PC-3 (cell line): ENCODE measurements at regions of chr7 and their contacts with region 1.

Region 1: GRCh38 chr7:70016044-70016770 is 417.9 kb downstream of the AUTS2 start:
- DNase-seq: no peak
- ATAC-seq: no peak
- H3K4me3 ChIP-seq: no peak overlapping the region
- H3K27ac ChIP-seq: no peak overlapping the region
- H3K4me1 ChIP-seq: no peaks in the 10 kb centered on the region
- H3K27me3 ChIP-seq: no peaks in the 10 kb centered on the region
- CTCF ChIP-seq: no peak

Region 2: DNA sequence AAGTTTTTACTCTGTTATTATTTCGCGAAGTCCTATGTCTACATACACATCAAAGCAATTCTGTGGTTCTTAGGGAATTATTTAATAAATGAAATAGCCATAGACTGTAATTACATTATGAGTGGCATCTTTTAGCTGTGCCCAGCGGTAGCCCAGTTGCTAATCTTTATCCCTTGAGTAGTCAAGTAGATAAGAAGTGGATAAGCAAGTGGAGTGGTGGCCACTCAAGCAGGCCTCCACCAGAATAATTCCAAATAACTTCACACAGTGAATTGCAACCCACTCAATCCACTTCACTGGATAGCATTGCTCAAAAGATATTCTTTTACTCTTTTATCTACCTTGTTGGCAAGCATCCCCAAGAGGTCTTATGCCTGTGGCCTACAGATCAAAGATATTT is 68.2 kb before region 1 on chr7:
- CTCF ChIA-PET with region 1: no interaction called
- POLR2A ChIA-PET with region 1: no interaction called
- intact Hi-C with region 1: no loop called
- DNase-seq: no peak
- ATAC-seq: no peak
- H3K4me3 ChIP-seq: no peak overlapping the region
- H3K27ac ChIP-seq: no peak overlapping the region
- H3K4me1 ChIP-seq: no peaks in the 10 kb centered on the region
- H3K27me3 ChIP-seq: no peaks in the 10 kb centered on the region
- CTCF ChIP-seq: no peak

Region 3: DNA sequence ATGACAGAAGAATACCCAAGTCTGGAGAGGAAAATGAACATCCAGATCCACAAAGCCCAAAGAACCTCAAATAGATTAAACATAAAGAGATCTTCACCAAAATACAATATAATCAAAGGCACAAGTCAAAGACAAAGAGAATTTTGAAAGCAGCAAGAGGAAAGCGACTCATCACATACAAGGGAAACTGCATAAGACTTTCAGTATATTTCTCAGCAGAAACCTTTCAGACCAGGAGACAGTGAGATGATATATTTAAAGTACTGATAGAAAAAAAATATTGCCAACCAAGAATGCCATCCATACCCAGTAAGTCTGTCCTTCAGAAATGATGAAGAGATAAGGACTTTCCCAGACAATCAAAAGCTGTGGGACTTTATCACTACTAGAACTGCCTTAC is 1034.3 kb after region 1 on chr7:
- CTCF ChIA-PET with region 1: no interaction called
- POLR2A ChIA-PET with region 1: no interaction called
- intact Hi-C with region 1: no loop called
- DNase-seq: no peak
- ATAC-seq: no peak
- H3K4me3 ChIP-seq: no peak overlapping the region
- H3K27ac ChIP-seq: no peak overlapping the region
- H3K4me1 ChIP-seq: no peaks in the 10 kb centered on the region
- H3K27me3 ChIP-seq: no peaks in the 10 kb centered on the region
- CTCF ChIP-seq: no peak

Region 4: GRCh38 chr7:71793251-71793650 is 1777.0 kb after region 1 on chr7:
- CTCF ChIA-PET with region 1: interaction called, 10 read pairs
- POLR2A ChIA-PET with region 1: no interaction called
- intact Hi-C with region 1: no loop called
- DNase-seq: no peak
- ATAC-seq: no peak
- H3K4me3 ChIP-seq: no peak overlapping the region
- H3K27ac ChIP-seq: no peak overlapping the region
- H3K4me1 ChIP-seq: no peaks in the 10 kb centered on the region
- H3K27me3 ChIP-seq: no peaks in the 10 kb centered on the region
- CTCF ChIP-seq: no peak